ENCODE measurements at regions of chr16 and their contacts with region 1.

Region 1: DNA sequence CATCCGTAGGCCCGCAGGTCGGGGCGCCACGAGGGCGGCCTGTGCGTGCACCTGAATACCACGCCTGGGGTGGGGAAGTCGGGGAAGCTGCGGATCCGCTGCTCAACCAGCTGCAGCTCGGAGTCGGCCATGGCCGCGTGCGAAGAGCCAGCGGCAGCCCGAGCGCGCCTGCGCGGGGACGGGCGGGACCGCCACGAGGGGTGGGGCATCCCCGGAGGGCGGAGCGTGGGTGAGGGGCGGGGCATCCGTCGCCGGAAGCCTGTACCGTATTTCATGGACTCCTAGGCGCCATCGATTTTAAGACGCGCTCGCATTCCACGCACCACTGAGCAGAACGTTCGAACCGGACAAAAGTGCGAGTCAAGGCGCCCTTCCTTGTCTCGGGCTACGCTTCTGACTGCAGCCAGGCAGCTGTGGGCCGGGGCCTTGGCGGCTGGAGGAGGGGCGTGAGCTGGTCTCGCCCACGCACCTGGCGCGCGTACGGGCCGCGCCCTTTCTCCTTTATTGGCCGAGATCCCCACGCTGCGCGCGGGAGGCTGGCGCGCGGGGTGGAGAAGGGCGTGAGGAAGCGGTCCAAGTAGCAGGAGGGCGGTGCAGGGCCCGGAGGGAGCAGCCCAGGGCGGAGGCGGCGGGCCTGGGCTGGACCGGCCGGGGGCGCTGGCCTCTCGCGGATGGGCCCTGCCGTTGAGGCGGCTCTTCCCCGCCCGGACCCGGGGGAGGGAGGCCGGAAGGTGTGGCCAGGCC is at the start of gene APRT:
- DNase-seq: peak; percentile 100
- ATAC-seq: peak; percentile 71
- H3K4me3 Mint-ChIP-seq: peak within 1 kb of the TSS; percentile 96
- H3K27ac Mint-ChIP-seq: peak within 1 kb of the TSS; percentile 99
- H3K4me1 Mint-ChIP-seq: peaks cover 14% of the 10 kb centered on the region
- H3K27me3 Mint-ChIP-seq: no peaks in the 10 kb centered on the region
- total RNA-seq, gene APRT: 124 to 139 TPM

Region 2: GRCh38 chr16:88796278-88796677 is 15.7 kb before region 1 on chr16:
- POLR2A ChIA-PET with region 1: no interaction called
- DNase-seq: no peak
- ATAC-seq: no peak
- H3K4me3 Mint-ChIP-seq: no peak overlapping the region
- H3K27ac Mint-ChIP-seq: no peak overlapping the region
- H3K4me1 Mint-ChIP-seq: peaks cover 45% of the 10 kb centered on the region
- H3K27me3 Mint-ChIP-seq: no peaks in the 10 kb centered on the region

Region 3: GRCh38 chr16:88826070-88826840 is 14.3 kb after region 1 on chr16:
- POLR2A ChIA-PET with region 1: no interaction called
- DNase-seq: no peak
- ATAC-seq: no peak
- H3K4me3 Mint-ChIP-seq: no peak overlapping the region
- H3K27ac Mint-ChIP-seq: no peak overlapping the region
- H3K4me1 Mint-ChIP-seq: peaks cover 1% of the 10 kb centered on the region
- H3K27me3 Mint-ChIP-seq: no peaks in the 10 kb centered on the region

Region 4: DNA sequence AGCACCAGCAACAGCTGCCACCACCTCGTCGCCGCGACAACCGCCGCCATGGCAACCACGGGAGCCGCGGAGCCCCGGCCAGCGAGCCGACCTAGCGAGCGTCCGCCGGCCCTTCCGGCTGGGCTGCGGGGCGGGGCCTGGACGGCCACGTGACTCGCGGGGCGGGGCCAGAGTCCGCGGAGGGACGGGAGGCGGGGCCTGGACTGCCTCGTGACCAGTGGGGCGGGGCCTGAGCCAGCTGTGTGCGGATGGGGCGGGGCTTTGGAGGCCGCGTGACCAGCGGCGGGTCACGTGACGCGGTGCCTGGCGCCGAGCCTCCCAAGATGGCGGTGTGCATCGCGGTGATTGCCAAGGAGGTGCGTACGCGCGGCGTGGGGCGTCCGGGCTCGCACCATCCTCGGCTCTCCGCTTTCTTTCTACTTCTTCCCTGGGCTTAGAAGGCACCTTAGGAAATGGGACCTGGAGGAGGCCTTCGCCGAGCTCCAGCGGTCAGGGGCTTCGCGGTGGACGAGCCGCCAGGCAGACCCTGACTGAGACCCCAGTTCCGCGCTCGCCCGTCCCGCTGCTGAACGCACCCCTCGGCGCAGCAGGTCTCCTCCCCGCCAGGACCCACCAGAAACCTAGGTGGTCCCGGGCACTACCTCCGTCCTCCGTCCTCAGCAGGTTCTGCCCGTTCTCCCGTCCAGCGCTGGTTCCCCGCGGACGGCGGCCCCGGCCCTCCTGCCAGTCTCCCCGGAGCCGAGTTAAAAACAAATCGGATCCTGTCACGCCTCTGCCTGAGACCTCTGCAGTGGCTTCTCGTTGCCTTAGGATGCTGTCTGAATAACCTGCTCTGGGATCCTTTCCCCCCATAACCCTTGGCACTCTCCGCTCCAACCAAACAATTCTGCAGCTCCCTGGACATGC is 45.1 kb after region 1 on chr16 and contains the starts of genes GALNS and TRAPPC2L:
- POLR2A ChIA-PET with region 1: interaction called, 15 read pairs
- DNase-seq: peak; percentile 100
- ATAC-seq: peak; percentile 79
- H3K4me3 Mint-ChIP-seq: peak within 1 kb of the TSS; percentile 95
- H3K27ac Mint-ChIP-seq: peak within 1 kb of the TSS; percentile 93
- H3K4me1 Mint-ChIP-seq: peaks cover 21% of the 10 kb centered on the region
- H3K27me3 Mint-ChIP-seq: no peaks in the 10 kb centered on the region
- total RNA-seq, gene GALNS: 50.9 to 51.8 TPM
- total RNA-seq, gene TRAPPC2L: 47.4 to 50.9 TPM

Region 5: GRCh38 chr16:88870608-88871348 is 58.8 kb after region 1 on chr16:
- POLR2A ChIA-PET with region 1: no interaction called
- DNase-seq: no peak
- ATAC-seq: peak; percentile 27
- H3K4me3 Mint-ChIP-seq: no peak overlapping the region
- H3K27ac Mint-ChIP-seq: no peak overlapping the region
- H3K4me1 Mint-ChIP-seq: no peaks in the 10 kb centered on the region
- H3K27me3 Mint-ChIP-seq: peaks cover 13% of the 10 kb centered on the region

Region 6: DNA sequence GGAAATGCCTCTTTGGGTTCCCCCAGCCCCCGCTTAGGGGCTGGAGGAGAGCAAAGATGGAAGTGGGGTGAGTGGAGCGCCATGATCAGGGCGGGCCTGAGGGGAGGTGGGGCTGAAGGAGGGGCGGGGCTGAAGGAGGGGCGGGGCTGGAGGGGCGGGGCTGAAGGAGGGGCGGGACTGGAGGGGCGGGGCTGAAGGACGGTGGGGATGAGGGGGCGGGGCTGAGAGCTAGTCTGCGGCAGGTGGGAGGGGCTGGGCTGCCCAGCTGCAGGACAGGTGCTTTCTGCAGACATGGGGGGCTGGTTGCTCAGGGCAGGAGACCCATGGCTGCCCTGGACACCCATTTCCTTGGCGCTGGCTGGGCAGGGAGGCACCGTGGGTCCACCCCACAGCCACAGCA is 93.6 kb after region 1 on chr16:
- POLR2A ChIA-PET with region 1: no interaction called
- DNase-seq: no peak
- ATAC-seq: no peak
- H3K4me3 Mint-ChIP-seq: no peak overlapping the region
- H3K27ac Mint-ChIP-seq: no peak overlapping the region
- H3K4me1 Mint-ChIP-seq: peaks cover 2% of the 10 kb centered on the region
- H3K27me3 Mint-ChIP-seq: no peaks in the 10 kb centered on the region

Region 7: GRCh38 chr16:89217388-89218191 is 405.6 kb after region 1 on chr16 and contains the start of gene ZNF778:
- POLR2A ChIA-PET with region 1: interaction called, 11 read pairs
- DNase-seq: peak; percentile 88
- ATAC-seq: peak; percentile 83
- H3K4me3 Mint-ChIP-seq: peak within 1 kb of the TSS; percentile 91
- H3K27ac Mint-ChIP-seq: peak within 1 kb of the TSS; percentile 92
- H3K4me1 Mint-ChIP-seq: peaks cover 18% of the 10 kb centered on the region
- H3K27me3 Mint-ChIP-seq: peaks cover 3% of the 10 kb centered on the region
- total RNA-seq, gene ZNF778: 9.0 to 10.4 TPM